Heart left ventricle (tissue), 16 donors: ENCODE measurements at regions of chr15 and their contacts with region 1.

Region 1: GRCh38 chr15:64687688-64688087 is 87.7 kb downstream of the RBPMS2 start:
- DNase-seq: no peak
- ATAC-seq: peak in 3 of 4 donors; percentile 3 to 9 (median 8)
- H3K4me3 ChIP-seq: no peak overlapping the region
- H3K27ac ChIP-seq: peak overlapping the region in 10 of 12 donors; percentile 31 to 67 (median 54)
- H3K4me1 ChIP-seq: peaks cover 4 to 68% (median 49%) of the 10 kb centered on the region in 12 donors
- H3K27me3 ChIP-seq: no peaks in the 10 kb centered on the region
- CTCF ChIP-seq: no peak
- POLR2A ChIP-seq: no peak

Region 2: DNA sequence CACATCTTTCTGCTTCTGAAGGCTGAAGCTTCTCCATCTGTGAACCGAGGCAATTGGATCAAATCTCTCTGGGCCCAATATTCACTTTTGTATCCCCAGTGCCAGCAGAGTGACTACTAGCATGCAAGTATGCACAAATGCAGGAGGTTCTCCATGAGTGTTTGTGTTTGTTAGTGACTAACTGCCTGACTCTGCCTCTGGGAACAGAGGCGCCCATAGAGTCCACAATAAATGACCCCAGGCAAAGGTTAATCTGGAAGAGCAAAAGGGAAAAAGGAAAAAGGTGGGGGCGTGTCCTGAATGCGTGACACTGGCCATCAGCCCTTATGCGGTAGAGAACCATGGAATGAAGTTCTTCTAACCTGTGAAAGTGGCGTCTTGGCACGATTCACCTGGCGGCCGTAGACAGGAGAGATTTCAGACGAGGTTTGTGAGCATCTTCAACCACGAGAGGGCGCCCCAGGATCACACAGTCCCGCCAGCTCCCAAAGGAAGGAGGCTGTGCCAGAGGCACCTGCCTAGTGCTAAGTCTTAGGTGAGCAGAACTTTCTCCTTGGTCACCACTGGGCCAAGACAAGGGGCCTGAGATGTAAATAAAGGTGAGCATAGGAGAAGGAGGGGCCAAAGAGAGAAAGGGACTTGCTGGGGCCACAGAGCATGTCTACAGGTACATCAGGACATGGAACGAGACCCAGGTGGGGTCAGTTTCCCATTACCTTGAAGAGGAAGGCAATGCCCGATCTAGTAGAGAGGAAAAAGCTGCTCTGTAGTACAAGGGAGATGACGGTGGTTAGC is 43.5 kb after region 1 on chr15:
- intact Hi-C with region 1: loop called (anchors 1 to 2 kb)
- DNase-seq: peak; percentile 81 to 89 (median 83)
- ATAC-seq: peak; percentile 47 to 79 (median 70)
- H3K4me3 ChIP-seq: no peak overlapping the region
- H3K27ac ChIP-seq: peak overlapping the region in 1 of 12 donors; percentile 19
- H3K4me1 ChIP-seq: peaks cover 0 to 14% (median 0%) of the 10 kb centered on the region in 12 donors
- H3K27me3 ChIP-seq: no peaks in the 10 kb centered on the region
- CTCF ChIP-seq: peak; percentile 82 to 96 (median 90)
- POLR2A ChIP-seq: no peak